OCI-LY7 (cell line): ENCODE measurements at regions of chr3 and their contacts with region 1.

Region 1: DNA sequence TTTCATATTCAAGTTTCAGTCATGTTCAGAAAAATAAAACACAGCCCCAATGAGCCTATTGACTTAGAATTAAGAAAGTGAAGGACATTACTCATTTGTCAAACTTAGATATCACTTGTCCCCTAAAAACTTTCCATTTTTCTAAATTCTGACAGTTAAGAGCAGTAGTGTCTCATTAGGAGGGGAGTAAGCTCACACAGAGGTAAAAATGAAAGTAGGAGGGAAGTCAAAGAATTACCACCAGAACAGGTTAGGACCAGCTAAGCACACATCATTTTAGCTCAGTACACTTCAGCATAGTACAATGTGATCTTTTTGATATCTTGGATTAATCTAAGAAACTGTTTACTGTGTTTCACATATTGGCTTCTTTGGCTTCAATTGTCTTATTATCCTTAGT is 64.3 kb downstream of the OSTN start:
- DNase-seq: peak; percentile 44
- H3K4me3 ChIP-seq: peak overlapping the region; percentile 51
- H3K27ac ChIP-seq: peak overlapping the region; percentile 62
- H3K4me1 ChIP-seq: peaks cover 43% of the 10 kb centered on the region
- CTCF ChIP-seq: no peak

Region 2: GRCh38 chr3:191282262-191283215 is 19.2 kb after region 1 on chr3:
- CTCF ChIA-PET with region 1: no interaction called
- POLR2A ChIA-PET with region 1: interaction called, 14 read pairs
- intact Hi-C with region 1: no loop called
- DNase-seq: no peak
- H3K4me3 ChIP-seq: no peak overlapping the region
- H3K27ac ChIP-seq: no peak overlapping the region
- H3K4me1 ChIP-seq: no peaks in the 10 kb centered on the region
- CTCF ChIP-seq: no peak